ENCODE measurements at regions of chr19 and their contacts with region 1.

Region 1: GRCh38 chr19:29263305-29264135 is 50.6 kb upstream of the UQCRFS1 start:
- DNase-seq: no peak
- ATAC-seq: peak in 3 of 4 donors; percentile 20 to 40 (median 34)
- H3K4me3 ChIP-seq: no peak overlapping the region
- H3K27ac ChIP-seq: no peak overlapping the region
- H3K4me1 ChIP-seq: no peaks in the 10 kb centered on the region
- H3K27me3 ChIP-seq: peaks cover 0 to 22% (median 0%) of the 10 kb centered on the region in 9 donors
- CTCF ChIP-seq: peak; percentile 46 to 76 (median 64)
- POLR2A ChIP-seq: no peak

Region 2: GRCh38 chr19:29001141-29001581 is 262.4 kb before region 1 on chr19:
- intact Hi-C with region 1: loop called in 1 of 10 experiments (anchors 10 kb)
- DNase-seq: no peak
- ATAC-seq: no peak
- H3K4me3 ChIP-seq: no peak overlapping the region
- H3K27ac ChIP-seq: no peak overlapping the region
- H3K4me1 ChIP-seq: peaks cover 0 to 2% (median 0%) of the 10 kb centered on the region in 12 donors
- H3K27me3 ChIP-seq: no peaks in the 10 kb centered on the region
- CTCF ChIP-seq: no peak
- POLR2A ChIP-seq: no peak

Region 3: GRCh38 chr19:29121684-29122083 is 141.8 kb before region 1 on chr19:
- intact Hi-C with region 1: loop called in 4 of 10 experiments (anchors 2 to 10 kb)
- DNase-seq: no peak
- ATAC-seq: peak in 1 of 4 donors; percentile 39
- H3K4me3 ChIP-seq: no peak overlapping the region
- H3K27ac ChIP-seq: no peak overlapping the region
- H3K4me1 ChIP-seq: no peaks in the 10 kb centered on the region
- H3K27me3 ChIP-seq: peaks cover 0 to 11% (median 0%) of the 10 kb centered on the region in 9 donors
- CTCF ChIP-seq: peak in 9 of 12 donors; percentile 17 to 50 (median 28)
- POLR2A ChIP-seq: no peak

Measured in heart left ventricle (tissue), 16 donors.